ENCODE measurements at regions of chr20 and their contacts with region 1.

Region 1: DNA sequence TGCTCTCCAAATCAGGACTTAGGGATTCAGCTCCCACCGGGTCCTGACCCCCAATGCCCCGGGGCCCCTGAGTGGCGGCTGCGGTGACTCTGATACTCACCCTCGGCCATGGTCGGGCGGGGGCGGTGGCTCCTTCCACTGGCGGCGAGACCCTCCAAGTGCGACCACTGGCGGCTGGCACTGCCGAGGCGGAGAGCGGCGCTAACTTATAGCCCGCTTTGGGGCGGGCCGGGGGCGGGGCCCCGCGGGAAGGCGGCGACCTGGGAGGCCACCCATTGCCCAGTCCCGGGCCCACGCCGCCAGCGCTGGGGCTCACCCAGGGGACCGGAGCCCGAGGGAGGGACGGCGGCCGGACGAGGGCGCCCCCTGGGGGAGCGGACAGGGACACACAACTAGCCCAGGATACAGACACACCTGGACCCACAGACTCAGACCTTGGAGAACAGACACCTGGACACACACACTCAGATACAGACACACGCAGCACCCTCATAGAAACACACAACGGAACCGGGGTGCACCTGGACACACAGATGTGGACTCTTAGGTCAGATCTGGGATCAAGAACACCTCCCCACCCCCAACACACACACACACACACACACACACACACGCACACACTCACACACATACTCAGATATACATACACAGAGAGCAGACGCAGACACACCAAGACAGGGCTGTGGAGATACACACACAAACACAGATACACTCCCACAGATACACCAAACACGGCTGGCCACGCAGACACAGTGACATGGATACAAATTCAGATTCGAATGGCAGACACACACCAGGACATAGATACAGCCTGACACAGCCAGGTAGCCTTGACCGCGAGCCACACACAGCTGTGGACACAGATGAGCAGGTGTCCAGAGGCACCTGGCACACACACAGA is at the start of gene TGM2:
- DNase-seq: peak; percentile 89
- CTCF ChIP-seq: peak; percentile 74

Region 2: DNA sequence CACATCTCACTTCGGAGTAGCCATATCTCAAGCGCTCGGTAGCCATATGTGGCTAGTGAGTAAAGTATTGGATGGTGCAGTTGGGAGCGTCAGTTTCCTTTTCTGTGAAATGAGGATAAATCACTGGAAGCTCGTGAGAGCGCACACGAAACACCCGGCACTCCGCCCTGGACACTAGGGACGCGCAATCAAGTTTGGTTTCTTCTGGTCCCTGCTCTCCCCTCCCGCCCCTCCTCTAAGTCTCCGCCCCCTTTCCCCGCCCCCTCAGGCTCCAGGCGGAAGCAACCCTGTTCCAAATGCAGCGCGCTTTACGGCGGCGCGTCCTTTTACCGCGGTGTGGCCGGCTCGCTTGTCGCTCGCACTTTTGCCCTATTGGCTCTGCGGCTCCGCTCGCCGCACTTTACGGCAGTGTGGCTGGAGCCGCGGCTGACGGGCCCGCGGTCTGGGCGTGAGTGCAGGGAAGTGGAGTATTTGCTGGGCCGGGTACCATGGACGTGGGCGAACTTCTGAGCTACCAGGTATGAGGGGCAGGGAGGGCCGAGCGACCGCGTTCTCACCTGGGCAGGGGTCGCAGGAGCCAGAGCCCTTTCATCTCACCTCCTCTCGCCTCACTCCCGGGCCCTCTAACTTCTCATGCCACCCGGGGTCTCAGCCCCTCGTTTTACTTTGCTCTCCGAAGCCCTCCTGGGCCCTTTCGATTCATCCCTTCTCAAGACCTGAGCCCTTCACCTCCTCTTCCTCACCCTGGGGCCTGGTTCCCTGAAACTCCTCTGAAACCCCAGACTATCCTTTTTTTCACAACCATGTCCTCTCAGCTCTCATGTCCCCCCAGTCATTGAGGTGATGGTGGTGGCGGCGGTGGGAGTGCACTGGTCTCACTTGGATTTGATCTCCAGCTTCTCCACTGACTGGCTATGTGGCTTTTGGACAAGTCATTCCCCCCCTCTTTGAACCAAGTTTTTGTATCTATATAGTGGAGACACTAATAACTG is 471.4 kb before region 1 on chr20 and contains the start of gene CTNNBL1:
- CTCF ChIA-PET with region 1: no interaction called
- POLR2A ChIA-PET with region 1: no interaction called
- DNase-seq: peak; percentile 93
- CTCF ChIP-seq: no peak

Region 3: DNA sequence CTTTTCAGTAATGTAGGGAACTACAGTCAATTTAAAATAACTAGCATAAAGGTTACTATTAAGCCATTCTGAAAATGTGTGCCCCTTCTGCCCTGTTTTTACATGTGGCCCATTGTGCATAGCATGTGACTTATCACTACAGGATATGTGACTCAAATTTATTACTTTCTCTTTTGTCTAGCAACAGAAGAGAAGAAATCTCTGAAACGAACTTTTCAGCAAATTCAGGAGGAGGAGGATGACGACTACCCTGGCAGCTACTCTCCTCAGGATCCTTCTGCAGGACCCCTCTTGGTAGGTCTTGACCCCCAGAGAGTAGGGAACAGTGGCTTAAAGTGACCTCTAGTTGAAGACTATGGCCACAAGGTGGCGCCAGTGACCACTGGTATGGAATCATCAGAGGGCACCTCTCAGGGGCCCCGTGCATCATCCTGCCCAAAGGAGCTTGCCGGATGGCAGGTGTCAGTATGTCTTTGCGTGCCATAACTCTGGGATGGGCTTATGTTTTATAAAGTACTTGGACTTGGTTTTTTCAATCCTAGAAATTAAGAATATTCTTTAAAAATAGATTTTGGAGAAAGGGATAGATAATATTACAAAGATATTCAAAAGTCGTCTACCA is 107.9 kb before region 1 on chr20:
- CTCF ChIA-PET with region 1: interaction called, 116 read pairs
- POLR2A ChIA-PET with region 1: no interaction called
- DNase-seq: peak; percentile 74
- CTCF ChIP-seq: peak; percentile 79

Region 4: DNA sequence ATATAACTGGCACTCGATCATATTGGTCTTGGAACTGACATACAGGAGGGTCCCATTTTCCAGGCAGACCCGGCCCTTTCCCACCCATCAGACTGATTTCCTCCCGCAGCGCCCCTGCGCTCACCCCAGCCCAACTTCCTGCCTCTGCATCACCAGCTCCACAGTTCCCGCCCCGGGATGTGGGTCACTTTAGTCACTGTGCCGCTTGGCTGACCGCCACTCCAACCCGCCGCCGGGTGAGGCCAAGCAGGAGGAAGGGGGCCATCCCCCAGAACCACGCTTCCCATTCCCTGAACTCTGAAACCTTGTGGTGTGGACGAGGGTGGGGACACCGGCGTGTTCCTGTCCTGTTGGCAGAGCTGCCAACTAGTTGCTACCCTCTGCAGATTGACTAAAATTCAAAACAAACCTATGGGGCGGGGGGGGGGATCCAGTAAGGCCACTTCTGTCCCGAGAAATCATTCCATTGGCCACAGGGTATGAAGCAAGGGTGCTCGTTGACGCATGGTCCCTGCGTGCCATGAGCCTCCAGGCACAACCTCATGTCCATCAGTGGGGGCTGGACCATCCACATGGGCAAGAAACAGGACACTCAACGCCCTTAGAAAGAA is 12.6 kb before region 1 on chr20:
- CTCF ChIA-PET with region 1: interaction called, 12 read pairs
- POLR2A ChIA-PET with region 1: no interaction called
- DNase-seq: no peak
- CTCF ChIP-seq: no peak

Region 5: DNA sequence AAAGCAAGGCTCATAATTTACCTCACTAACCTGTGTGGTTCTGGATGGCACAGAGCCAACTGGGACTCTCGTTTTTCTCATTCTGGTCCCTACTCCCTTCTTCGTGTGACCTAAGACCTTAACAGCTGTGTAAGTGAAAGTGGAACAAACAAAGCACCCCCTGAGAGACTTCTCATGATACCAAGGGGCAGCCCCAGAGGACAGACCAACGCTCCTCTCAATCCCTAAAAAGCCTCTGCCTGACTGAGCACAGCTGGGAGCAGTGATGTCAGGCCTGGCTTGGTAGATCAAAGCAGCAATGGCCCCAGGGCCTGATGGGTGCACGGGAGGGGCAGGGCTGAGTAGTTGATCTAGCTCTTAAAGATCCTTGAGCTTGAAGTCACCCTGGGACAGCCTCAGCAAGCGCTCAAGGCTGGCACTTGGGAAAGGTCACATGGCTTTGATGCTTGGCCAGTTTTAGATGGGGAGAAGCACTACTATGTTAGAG is 15.9 kb after region 1 on chr20:
- CTCF ChIA-PET with region 1: interaction called, 10 read pairs
- POLR2A ChIA-PET with region 1: no interaction called
- DNase-seq: peak; percentile 63
- CTCF ChIP-seq: no peak

Measured in GM10248 (cell line).